PC-9 (cell line): ENCODE measurements at regions of chr3 and their contacts with region 1.

Region 1: GRCh38 chr3:165874663-165875489 is 37.7 kb upstream of the BCHE start:
- DNase-seq: peak; percentile 79
- H3K4me3 ChIP-seq: peak overlapping the region; percentile 63
- H3K27ac ChIP-seq: peak overlapping the region; percentile 82
- H3K4me1 ChIP-seq: peaks cover 18% of the 10 kb centered on the region
- H3K27me3 ChIP-seq: no peaks in the 10 kb centered on the region
- CTCF ChIP-seq: peak; percentile 74

Region 2: GRCh38 chr3:166283856-166284255 is 409.0 kb after region 1 on chr3:
- CTCF ChIA-PET with region 1: no interaction called
- POLR2A ChIA-PET with region 1: no interaction called
- intact Hi-C with region 1: loop called (anchors 10 kb)
- DNase-seq: peak in 1 of 2 experiments; percentile 26
- H3K4me3 ChIP-seq: no peak overlapping the region
- H3K27ac ChIP-seq: no peak overlapping the region
- H3K4me1 ChIP-seq: peaks cover 11% of the 10 kb centered on the region
- H3K27me3 ChIP-seq: no peaks in the 10 kb centered on the region
- CTCF ChIP-seq: no peak